ENCODE measurements at regions of chr22 and their contacts with region 1.

Region 1: GRCh38 chr22:50507991-50508884 is at the start of gene NCAPH2:
- DNase-seq: peak in 38 of 42 donors; percentile 92 to 99 (median 97)

Region 2: DNA sequence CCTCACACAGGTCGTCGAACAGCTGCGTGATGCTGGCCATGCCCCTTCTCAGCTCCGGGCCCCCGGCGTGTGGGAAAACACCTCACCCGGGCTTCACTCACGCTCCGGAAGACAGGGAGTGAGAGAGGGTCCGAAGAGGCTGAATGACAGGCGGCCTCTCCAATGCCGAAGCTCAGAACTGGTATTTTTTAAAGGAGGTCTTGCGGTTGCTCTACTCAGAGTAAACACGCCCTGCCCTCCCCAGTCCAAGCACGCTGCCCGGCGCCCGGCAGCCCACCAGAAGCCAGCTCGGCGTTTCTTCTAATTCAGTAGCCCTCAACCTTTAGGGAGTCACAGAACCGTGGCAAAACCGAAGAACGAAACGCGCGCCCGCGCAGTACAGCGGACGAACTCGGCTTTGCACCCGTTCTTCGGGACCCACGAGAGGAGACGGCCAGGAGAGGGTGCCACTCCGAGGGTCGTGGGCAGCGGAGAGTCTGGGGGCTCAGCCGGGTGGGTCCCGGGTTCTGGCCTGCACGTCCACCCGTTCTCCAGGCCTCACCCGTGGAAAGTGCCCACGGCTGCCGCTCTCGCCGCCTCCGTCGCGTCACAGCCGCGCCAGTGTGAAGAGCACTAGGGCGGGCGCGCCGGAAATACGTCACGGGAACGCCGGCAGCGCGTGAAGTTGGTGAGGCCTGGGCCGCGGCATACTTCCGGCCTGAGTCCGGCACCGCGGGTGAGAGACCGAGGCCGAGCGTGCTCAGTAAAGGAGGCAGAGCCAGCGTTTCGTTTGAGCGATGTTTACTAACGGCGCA is 263.6 kb before region 1 on chr22 and contains the start of gene TUBGCP6:
- intact Hi-C with region 1: loop called (anchors 10 kb)
- DNase-seq: peak; percentile 90 to 99 (median 97)

Region 3: GRCh38 chr22:50474668-50475492 is 33.4 kb before region 1 on chr22 and contains the start of gene SBF1:
- intact Hi-C with region 1: loop called (anchors 2 kb)
- DNase-seq: peak; percentile 81 to 97 (median 94)

Region 4: DNA sequence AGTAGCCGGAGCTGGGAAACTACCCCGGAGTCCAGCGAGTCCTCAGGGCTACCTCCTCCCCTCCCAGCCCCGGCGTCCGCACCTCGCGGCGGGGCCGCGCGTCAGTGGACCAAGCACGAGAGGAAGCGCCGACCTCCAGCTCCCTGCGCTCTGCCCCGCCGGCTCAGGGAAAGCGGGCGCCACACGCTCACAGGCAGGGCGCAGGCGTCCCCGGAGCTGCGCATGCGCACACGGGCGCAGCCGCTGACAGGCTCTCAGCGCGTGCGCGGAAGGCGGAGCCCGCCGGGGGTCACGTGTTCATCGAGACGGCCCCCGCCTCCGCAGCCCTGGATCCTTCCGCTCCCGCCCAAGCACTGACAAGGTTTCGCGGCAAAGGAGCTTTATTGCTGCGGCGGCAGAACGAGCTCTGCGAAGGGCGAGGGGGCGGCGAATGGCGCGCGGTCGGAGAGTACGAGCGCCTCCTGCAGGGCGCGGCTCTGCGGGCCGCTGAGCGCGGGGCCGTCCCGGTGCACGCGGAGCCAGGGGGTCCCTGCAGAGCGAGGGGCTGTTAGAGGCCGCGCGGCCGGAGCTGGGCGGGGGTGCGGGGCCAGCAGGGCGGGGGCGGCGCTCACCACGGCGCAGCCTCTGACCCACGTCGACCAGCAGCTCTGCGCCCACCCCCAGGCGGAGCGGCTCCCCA is 17.3 kb after region 1 on chr22 and contains the start of gene SCO2:
- intact Hi-C with region 1: loop called (anchors 2 kb)
- DNase-seq: peak; percentile 84 to 98 (median 95)